PC-3 (cell line): ENCODE measurements at regions of chrX and their contacts with region 1.

Region 1: DNA sequence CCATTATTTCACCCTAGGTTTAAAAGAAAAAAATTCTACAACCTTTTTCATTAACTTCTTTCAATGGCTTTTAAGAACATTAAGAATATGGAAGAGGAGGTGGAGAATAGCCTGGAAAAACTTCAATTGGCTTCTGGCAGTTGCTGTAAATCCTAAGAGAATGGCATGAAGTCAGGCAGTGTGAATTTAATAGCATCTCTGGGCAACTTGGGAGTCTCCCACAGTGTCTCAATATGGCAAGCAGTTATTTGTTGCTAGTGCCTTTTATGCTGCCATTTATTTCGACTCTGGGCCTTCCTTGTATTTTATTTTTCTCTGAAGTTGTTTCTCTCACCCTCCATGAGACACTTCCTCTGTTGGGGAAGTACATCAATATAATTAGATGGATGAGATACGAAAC is 322.1 kb downstream of the CBLL2 start:
- DNase-seq: no peak
- ATAC-seq: no peak
- H3K4me3 ChIP-seq: no peak overlapping the region
- H3K27ac ChIP-seq: no peak overlapping the region
- H3K4me1 ChIP-seq: no peaks in the 10 kb centered on the region
- H3K27me3 ChIP-seq: no peaks in the 10 kb centered on the region
- CTCF ChIP-seq: no peak

Region 2: DNA sequence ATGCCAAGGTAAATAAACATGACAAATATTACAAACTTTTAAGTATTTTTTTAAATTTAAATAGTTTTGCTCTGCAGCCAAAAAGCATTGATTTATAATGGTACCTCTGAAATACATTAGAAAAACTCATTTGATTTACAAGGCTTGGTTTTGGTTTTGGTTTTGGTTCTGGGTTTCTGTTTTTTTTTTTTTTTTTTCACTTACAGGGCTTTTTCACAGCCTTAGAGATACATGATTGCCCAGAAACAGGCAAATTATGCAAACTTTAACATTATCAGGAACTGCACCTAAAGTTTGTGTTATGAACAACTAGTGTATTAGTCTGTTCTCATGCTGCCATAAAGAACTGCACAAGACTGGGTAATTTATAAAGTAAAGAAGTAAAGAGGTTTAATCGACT is 208.6 kb after region 1 on chrX:
- CTCF ChIA-PET with region 1: interaction called, 10 read pairs
- POLR2A ChIA-PET with region 1: no interaction called
- intact Hi-C with region 1: no loop called
- DNase-seq: no peak
- ATAC-seq: no peak
- H3K4me3 ChIP-seq: no peak overlapping the region
- H3K27ac ChIP-seq: no peak overlapping the region
- H3K4me1 ChIP-seq: peaks cover 17% of the 10 kb centered on the region
- H3K27me3 ChIP-seq: no peaks in the 10 kb centered on the region
- CTCF ChIP-seq: no peak

Region 3: DNA sequence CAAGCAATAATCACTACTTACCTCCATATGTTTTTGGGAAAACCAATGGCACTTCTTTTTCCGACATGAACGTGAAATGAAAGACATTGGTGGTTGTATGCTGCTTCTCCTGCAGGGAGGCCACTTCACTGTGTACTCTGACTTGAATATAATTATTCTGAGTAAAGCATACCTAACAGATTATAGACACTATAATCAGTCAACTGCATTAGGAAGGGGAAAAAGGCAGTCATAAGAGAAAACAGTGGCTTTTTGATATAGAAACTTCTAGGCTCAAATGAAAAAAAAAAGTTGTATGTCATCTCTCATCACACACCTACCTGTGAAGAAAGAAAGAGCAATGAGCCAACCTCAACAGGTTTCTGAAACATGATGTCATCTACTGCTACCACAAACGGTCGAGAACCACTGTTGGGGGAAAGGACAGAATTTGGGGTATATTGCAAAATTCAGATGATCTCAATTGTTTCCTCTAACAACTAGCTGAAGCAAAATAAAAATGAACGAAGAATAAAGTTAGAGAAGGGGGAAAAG is 1110.0 kb after region 1 on chrX:
- CTCF ChIA-PET with region 1: no interaction called
- POLR2A ChIA-PET with region 1: no interaction called
- intact Hi-C with region 1: no loop called
- DNase-seq: no peak
- ATAC-seq: no peak
- H3K4me3 ChIP-seq: no peak overlapping the region
- H3K27ac ChIP-seq: no peak overlapping the region
- H3K4me1 ChIP-seq: no peaks in the 10 kb centered on the region
- H3K27me3 ChIP-seq: no peaks in the 10 kb centered on the region
- CTCF ChIP-seq: no peak